Transverse colon (tissue), 4 donors: ENCODE measurements at regions of chr3 and their contacts with region 1.

Region 1: DNA sequence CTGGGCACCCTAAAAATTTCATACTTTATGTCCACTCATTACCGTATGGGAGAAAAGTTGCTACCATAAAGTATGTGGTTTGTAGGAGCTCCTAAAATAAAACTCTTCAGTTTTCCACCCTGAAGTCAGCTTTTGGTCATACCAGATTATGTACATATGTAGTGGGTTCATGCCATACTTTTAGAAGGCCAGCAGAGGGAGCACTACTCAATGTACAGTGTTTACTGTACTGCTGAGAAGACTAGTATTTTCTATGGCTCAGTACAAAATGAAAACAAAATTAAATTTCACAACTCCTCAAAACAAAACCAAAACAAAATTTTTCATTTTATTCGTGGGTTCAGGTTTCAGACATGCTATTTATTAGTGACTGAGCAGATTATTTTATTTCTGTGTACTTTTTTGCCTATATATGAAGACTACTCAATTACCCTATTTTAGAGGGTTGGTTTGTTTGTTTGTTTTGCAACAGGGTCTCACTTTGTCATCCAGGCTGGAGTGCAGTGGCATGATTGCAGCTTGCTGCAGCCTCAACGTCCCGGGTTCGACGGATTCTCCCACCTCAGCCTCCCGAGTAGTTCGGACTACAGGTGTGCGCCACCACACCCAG is 24.3 kb downstream of the NXPE3 start:
- DNase-seq: peak; percentile 51
- H3K4me3 ChIP-seq: no peak overlapping the region
- H3K27ac ChIP-seq: no peak overlapping the region
- H3K4me1 ChIP-seq: peaks cover 0 to 11% (median 4%) of the 10 kb centered on the region in 4 donors
- H3K27me3 ChIP-seq: no peaks in the 10 kb centered on the region
- CTCF ChIP-seq: peak; percentile 80 to 90 (median 83)
- EP300 ChIP-seq: no peak
- POLR2A ChIP-seq: no peak

Region 2: GRCh38 chr3:101849721-101850245 is 46.5 kb after region 1 on chr3:
- in situ Hi-C with region 1: no loop called
- intact Hi-C with region 1: loop called (anchors 10 kb)
- DNase-seq: peak; percentile 52
- H3K4me3 ChIP-seq: peak overlapping the region; percentile 63 to 99 (median 94)
- H3K27ac ChIP-seq: peak overlapping the region; percentile 96 to 100 (median 99)
- H3K4me1 ChIP-seq: peaks cover 13 to 67% (median 34%) of the 10 kb centered on the region in 4 donors
- H3K27me3 ChIP-seq: no peaks in the 10 kb centered on the region
- CTCF ChIP-seq: peak in 1 of 5 experiments; percentile 8
- EP300 ChIP-seq: no peak
- POLR2A ChIP-seq: no peak

Region 3: GRCh38 chr3:102113411-102114041 is 310.2 kb after region 1 on chr3:
- in situ Hi-C with region 1: no loop called
- intact Hi-C with region 1: no loop called
- DNase-seq: no peak
- H3K4me3 ChIP-seq: no peak overlapping the region
- H3K27ac ChIP-seq: peak overlapping the region in 3 of 4 donors; percentile 13 to 17 (median 15)
- H3K4me1 ChIP-seq: peaks cover 0 to 8% (median 2%) of the 10 kb centered on the region in 4 donors
- H3K27me3 ChIP-seq: no peaks in the 10 kb centered on the region
- CTCF ChIP-seq: no peak
- EP300 ChIP-seq: no peak
- POLR2A ChIP-seq: no peak

Region 4: GRCh38 chr3:102536456-102536855 is 733.2 kb after region 1 on chr3:
- in situ Hi-C with region 1: loop called (anchors 10 to 25 kb)
- intact Hi-C with region 1: no loop called
- DNase-seq: no peak
- H3K4me3 ChIP-seq: no peak overlapping the region
- H3K27ac ChIP-seq: no peak overlapping the region
- H3K4me1 ChIP-seq: no peaks in the 10 kb centered on the region
- H3K27me3 ChIP-seq: no peaks in the 10 kb centered on the region
- CTCF ChIP-seq: peak; percentile 31 to 48 (median 36)
- EP300 ChIP-seq: no peak
- POLR2A ChIP-seq: no peak